Dorsolateral prefrontal cortex (tissue), 120 donors: ENCODE measurements at regions of chr2 and their contacts with region 1.

Region 1: DNA sequence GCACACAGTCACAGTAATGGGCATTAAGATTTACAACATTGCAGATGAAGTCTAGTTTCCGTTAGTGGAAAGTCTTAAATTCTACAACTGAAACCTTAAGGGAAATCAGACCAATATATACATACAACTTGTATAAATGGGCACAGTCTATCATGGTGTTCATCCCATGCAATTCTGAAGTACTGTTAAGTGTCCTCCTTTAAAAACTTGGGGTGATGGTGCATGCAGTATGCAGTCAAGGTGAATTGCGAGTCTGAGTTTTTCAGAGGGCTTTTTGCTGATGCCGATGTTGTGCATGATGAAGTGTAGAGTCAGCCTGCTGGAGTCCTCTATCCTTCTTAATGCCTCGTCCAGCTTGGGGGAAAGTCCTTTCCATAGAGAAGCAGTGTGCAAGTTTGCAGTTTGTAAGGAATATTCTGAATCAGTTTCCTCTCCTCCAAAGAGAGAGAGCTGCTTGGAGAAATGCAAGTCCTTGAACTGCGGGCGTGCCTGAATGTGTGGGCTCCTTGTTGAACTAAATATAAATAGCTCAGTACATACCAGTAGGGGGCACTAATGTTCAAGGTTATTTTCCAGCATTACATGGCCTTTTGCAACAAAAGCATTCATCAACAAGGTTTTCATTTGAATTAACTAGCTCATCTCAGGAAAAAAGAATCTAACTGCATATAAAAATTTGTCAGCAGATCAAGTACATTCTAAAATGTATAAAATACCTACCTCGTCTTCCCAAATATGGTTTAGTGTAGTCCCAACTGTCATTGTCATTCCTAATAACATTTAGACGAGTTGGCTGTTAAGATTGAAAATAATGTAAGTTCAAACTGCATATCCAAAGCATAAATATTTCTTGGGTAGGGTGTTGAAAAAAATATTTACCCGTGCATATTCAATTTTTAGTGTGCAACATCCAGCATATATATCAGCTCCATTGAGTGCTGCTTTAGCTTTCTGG is 21.3 kb downstream of the HNRNPLL start:
- DNase-seq: peak in 7 of 10 donors; percentile 28 to 63 (median 50)
- H3K4me3 ChIP-seq: no peak overlapping the region
- H3K27ac ChIP-seq: peak overlapping the region in 12 of 59 donors; percentile 2 to 57 (median 19)
- H3K27me3 ChIP-seq: no peaks in the 10 kb centered on the region
- CTCF ChIP-seq: peak; percentile 65 to 90 (median 79)

Region 2: GRCh38 chr2:38665854-38666555 is 84.5 kb after region 1 on chr2 and contains the start of gene GALM:
- intact Hi-C with region 1: no loop called
- DNase-seq: peak in 6 of 10 donors; percentile 26 to 55 (median 34)
- H3K4me3 ChIP-seq: peak within 1 kb of the TSS; percentile 40 to 81 (median 65)
- H3K27ac ChIP-seq: peak within 1 kb of the TSS in 56 of 59 donors; percentile 2 to 82 (median 59)
- H3K27me3 ChIP-seq: no peaks in the 10 kb centered on the region
- CTCF ChIP-seq: peak in 3 of 56 donors; percentile 11 to 29 (median 16)
- total RNA-seq, gene GALM: 2.0 to 13.3 (median 4.5) TPM

Region 3: DNA sequence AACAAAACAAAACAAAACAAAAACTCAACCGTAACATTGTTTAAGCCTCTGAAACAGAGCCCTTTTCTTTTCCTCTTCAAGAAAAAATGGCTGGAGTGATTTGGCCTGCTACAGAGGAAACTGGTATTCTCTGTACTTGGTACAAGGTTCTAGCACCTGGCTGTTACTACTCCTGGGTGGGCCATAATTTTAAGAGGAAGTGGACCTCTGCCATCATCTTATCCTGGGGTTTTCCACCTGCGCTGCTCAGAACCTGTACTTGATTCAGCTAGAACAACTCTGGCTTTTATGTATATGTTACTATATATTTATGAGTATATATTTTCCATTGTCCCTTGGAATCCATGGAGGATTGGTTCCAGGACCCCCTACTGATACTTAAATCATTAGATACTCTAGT is 147.2 kb after region 1 on chr2:
- intact Hi-C with region 1: loop called (anchors 5 kb)
- DNase-seq: no peak
- H3K4me3 ChIP-seq: no peak overlapping the region
- H3K27ac ChIP-seq: no peak overlapping the region
- H3K27me3 ChIP-seq: no peaks in the 10 kb centered on the region
- CTCF ChIP-seq: no peak